ENCODE measurements at regions of chr11 and their contacts with region 1.

Region 1: GRCh38 chr11:44823006-44823405 is 96.2 kb downstream of the TSPAN18 start:
- DNase-seq: no peak
- H3K4me3 ChIP-seq: no peak overlapping the region
- H3K27ac ChIP-seq: no peak overlapping the region
- H3K27me3 ChIP-seq: no peaks in the 10 kb centered on the region
- CTCF ChIP-seq: no peak

Region 2: DNA sequence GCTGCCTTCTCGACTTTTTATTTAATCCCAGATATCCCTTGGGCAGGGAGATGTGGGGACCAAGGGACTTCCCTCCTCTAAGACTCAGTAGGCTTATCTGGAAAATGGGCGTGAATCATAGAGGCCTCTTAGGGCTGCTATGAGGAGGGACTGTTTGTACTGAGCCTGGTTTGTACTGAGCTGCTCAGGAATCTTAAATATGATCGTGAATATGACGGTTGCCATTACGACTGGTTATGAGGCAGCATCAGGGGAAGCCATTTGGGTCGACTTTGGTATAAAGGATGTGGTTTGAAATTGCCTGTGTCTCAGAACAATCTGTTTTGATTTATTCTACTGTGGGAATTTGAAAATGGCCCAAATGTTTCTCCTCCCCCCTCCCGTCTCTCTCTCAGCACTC is 75.7 kb before region 1 on chr11:
- intact Hi-C with region 1: no loop called
- DNase-seq: no peak
- H3K4me3 ChIP-seq: no peak overlapping the region
- H3K27ac ChIP-seq: peak overlapping the region in 1 of 59 donors; percentile 73
- H3K27me3 ChIP-seq: no peaks in the 10 kb centered on the region
- CTCF ChIP-seq: peak in 1 of 56 donors; percentile 3

Region 3: DNA sequence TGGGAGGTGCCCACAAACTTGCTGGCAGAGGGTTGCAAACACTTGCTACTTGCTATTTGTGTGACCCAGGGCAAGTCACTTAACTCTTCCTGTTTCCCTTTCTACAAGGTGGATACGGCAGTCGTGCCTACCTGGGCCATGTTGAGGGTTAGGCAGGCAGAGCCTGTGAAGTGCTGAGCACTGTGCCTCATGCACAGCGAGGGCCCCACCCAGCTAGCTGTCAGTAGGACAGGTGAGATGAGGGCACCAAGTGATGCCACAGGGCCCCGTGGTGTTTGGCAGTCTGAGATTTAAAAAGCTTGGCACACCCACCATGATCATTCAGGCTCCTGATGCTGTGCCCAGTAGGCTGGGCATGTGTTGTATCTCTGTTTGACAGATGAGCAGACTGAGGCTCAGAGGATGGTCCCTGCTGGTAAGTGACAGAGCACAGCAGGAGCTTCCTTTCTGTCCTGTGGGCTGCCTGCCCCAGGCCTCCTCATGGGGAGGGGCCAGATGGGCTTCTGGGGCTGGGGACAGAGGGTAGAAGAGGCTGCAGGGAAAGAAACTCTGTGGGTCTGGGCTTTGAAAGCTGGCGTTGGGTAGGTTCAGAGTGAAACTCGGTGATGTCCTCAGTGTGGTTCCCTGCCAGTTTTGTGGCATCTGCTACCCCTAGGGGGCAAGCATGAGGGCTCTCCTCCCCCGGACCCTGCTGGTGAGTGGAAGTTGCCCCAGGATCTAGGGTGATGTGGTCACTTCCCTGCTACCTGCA is 37.0 kb before region 1 on chr11:
- intact Hi-C with region 1: no loop called
- DNase-seq: peak in 1 of 10 donors; percentile 62
- H3K4me3 ChIP-seq: no peak overlapping the region
- H3K27ac ChIP-seq: no peak overlapping the region
- H3K27me3 ChIP-seq: peaks cover 0 to 14% (median 0%) of the 10 kb centered on the region in 45 donors
- CTCF ChIP-seq: no peak

Region 4: DNA sequence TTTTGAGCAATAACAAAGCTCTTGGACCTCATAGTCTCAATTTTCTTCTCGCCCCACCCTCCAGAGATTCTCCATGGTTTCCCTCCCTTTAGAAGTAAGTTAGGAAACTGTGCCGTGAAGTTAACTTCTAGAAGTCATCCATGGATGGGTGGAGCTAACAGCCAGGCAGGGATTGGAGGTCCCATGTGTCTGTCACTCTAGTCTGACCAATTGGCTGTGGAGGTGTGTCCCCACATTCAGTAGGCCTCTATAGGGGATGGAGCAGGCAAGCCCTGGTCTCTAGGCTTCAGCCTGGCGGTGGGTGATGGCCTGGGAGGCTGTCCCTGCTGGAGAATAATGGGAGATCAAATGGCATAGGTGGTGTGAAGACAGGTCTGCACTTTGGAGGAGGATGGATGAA is 77.0 kb after region 1 on chr11:
- intact Hi-C with region 1: loop called in 1 of 2 experiments (anchors 10 kb)
- DNase-seq: no peak
- H3K4me3 ChIP-seq: no peak overlapping the region
- H3K27ac ChIP-seq: no peak overlapping the region
- H3K27me3 ChIP-seq: peaks cover 0 to 3% (median 0%) of the 10 kb centered on the region in 45 donors
- CTCF ChIP-seq: no peak

Region 5: DNA sequence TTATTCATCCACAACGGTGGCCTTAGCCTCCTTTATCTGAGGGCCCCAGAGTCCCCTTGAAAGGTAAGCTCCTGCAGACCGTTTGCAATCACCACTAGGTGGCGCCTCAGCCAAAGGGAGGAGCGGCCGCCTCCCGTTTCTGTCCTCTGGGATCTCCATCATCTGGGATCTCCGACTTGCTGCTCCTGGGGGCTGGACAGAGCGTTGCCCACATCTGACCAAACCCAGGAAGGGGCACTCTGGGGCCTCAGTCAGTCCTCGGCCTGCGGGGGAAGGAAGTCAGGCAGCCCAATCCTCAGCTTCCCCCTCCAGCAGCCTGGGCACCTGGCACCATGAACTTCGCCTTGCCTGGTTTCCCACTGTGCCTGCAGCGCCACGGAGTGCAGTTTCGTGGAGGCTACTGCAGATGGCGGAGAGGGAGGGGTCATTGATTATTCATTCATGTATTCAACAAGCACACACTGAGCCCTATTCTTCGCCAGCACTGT is 104.2 kb after region 1 on chr11:
- intact Hi-C with region 1: no loop called
- DNase-seq: peak; percentile 79 to 90 (median 88)
- H3K4me3 ChIP-seq: peak overlapping the region in 54 of 59 donors; percentile 13 to 64 (median 42)
- H3K27ac ChIP-seq: peak overlapping the region in 57 of 59 donors; percentile 3 to 92 (median 76)
- H3K27me3 ChIP-seq: no peaks in the 10 kb centered on the region
- CTCF ChIP-seq: peak; percentile 76 to 99 (median 94)

Region 6: DNA sequence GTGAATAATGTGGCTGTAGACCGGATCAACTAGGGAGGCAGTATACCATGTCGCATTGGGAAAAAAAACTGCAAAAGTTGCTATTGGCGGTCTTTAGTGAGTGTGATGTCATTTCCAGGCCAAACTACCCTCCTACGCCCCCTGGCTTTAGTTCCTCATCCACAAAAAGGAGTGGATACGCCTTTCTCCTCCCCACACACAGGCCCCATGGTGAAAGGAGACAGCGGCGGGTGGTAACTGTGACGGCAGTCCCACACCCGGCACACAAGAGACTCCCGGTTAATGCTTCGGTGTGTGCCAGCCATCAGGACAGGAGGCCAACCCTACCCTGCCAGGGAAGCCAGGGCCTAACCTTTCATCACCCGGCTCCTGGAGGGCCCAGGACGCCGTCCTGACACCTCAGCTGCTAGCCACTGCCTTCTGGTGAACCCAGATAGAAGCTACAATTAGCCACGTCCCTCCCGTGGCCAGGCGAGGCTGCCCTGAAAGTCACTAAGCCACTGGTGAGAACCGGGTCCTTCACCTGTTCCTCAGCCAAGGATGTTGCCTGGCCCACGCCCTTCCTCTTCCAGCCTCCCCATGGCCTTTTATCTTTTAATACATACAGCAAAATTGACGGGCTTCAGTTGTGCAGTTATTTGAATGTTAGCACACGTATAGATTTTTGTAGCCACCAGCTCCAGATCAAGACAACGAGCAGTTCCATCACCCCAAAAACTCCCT is 116.8 kb after region 1 on chr11:
- intact Hi-C with region 1: no loop called
- DNase-seq: peak in 1 of 10 donors; percentile 39
- H3K4me3 ChIP-seq: no peak overlapping the region
- H3K27ac ChIP-seq: peak overlapping the region in 9 of 59 donors; percentile 5 to 63 (median 26)
- H3K27me3 ChIP-seq: peaks cover 0 to 3% (median 0%) of the 10 kb centered on the region in 45 donors
- CTCF ChIP-seq: peak in 23 of 56 donors; percentile 8 to 35 (median 20)